Activated B cell treated with CpG ODN at 0.5 μM for 24 hours (primary cell): ENCODE measurements at regions of chr10 and their contacts with region 1.

Region 1: DNA sequence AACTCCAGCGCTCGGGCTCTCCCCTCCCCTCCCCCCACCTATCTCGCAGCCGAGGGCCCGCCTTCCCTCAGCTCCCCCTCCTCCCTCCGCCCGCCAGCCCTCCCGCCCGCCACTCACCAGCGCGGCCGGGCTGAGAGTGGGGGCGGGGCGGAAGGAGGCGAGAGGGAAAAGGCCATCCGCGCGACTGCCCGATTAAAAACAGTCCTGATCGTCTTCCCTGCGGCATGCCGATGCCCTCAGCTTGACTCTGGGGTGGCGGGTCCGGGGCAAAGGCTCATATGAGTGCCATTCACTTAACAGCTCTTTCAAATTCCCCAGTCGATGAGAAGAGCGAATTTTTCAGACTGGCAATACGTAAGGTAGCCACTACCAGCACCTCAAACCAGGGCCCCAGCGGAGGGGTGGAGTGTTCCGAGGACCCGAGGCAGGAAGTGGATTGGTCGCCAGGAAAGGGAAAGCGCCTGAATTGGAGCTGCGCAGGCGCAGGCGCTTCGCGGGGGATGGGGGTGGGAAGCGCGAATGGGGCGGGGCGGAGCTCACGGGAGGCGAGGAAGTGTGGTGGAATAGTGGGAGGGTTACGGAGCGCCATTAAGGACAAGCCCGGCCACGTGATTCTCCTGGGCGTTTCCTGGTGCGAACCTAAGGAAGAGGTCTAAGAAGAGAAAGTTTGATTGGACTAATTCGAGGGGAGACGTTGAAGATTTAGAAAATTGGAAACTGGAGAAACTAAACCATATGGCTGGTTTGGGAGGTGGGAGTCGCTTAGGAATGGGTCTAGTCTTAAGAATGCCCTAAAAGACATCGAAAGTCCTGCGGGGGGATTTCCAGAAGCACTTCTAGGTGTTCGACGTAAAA is at the start of gene UPF2:
- DNase-seq: peak; percentile 90
- ATAC-seq: peak; percentile 74
- H3K4me3 Mint-ChIP-seq: peak within 1 kb of the TSS; percentile 95
- H3K27ac Mint-ChIP-seq: peak within 1 kb of the TSS; percentile 100
- H3K4me1 Mint-ChIP-seq: peaks cover 49% of the 10 kb centered on the region
- H3K27me3 Mint-ChIP-seq: no peaks in the 10 kb centered on the region
- CTCF ChIP-seq: no peak
- total RNA-seq, gene UPF2: 57.9 and 58.0 TPM in 2 replicates

Region 2: GRCh38 chr10:12031404-12031803 is 11.6 kb before region 1 on chr10:
- CTCF ChIA-PET with region 1: no interaction called
- POLR2A ChIA-PET with region 1: interaction called, 20 read pairs
- intact Hi-C with region 1: no loop called
- DNase-seq: no peak
- ATAC-seq: no peak
- H3K4me3 Mint-ChIP-seq: no peak overlapping the region
- H3K27ac Mint-ChIP-seq: no peak overlapping the region
- H3K4me1 Mint-ChIP-seq: peaks cover 12% of the 10 kb centered on the region
- H3K27me3 Mint-ChIP-seq: no peaks in the 10 kb centered on the region
- CTCF ChIP-seq: no peak

Region 3: GRCh38 chr10:12068449-12069269 is 25.6 kb after region 1 on chr10 and contains the start of gene DHTKD1:
- CTCF ChIA-PET with region 1: no interaction called
- POLR2A ChIA-PET with region 1: interaction called, 277 read pairs
- intact Hi-C with region 1: loop called (anchors 1 kb)
- DNase-seq: peak; percentile 99
- ATAC-seq: peak; percentile 96
- H3K4me3 Mint-ChIP-seq: peak within 1 kb of the TSS; percentile 87
- H3K27ac Mint-ChIP-seq: peak within 1 kb of the TSS; percentile 90
- H3K4me1 Mint-ChIP-seq: peaks cover 44% of the 10 kb centered on the region
- H3K27me3 Mint-ChIP-seq: no peaks in the 10 kb centered on the region
- CTCF ChIP-seq: no peak
- total RNA-seq, gene DHTKD1: 58.2 and 60.7 TPM in 2 replicates

Region 4: DNA sequence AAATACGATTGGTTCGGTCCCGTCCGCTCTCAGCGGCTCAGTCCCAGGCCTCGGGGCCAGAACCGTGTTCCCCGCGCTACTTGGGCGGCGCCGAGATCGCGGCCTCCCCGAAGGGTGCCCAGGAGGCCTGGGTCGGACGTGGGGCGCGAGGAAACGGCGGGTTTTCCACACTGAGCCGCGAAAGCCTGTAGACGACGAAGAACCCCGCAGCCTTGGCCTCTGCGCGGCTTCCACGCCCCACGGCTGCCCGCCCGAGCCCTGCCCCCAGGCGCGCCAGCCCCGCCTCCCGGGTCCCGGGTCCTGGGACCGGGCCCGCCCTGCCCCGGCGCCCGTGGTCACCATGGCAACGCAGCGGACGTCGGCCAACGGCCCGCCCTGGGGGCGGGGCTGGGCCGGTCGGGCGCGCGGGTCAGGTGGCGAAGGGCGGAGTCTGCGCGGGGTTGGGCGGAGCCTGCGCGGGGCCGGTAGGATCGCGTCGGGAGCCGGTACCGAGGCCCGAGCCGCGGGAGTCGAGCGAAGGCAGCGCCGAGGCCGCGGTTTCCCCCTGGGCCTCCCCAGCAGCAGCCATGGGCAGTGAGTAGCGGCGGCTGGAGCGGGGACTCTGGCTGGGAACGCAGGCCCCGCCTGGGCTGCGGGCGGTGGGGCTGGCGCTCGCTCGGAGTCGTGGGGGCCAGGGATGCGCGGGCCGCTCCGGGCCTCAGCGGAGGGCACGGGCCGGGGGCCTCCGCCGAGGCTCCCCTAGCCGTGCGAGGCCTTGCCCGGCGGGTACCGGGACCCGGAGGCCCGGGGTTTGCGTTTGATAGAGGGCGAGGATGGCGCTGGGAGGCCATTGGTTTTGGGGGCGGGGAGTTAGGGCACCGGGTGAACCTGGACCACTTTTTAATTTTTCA is 86.4 kb after region 1 on chr10 and contains the start of gene SEC61A2:
- CTCF ChIA-PET with region 1: interaction called, 6 read pairs
- POLR2A ChIA-PET with region 1: interaction called, 39 read pairs
- intact Hi-C with region 1: loop called (anchors 1 kb)
- DNase-seq: peak; percentile 100
- ATAC-seq: peak; percentile 89
- H3K4me3 Mint-ChIP-seq: peak within 1 kb of the TSS; percentile 90
- H3K27ac Mint-ChIP-seq: peak within 1 kb of the TSS; percentile 88
- H3K4me1 Mint-ChIP-seq: peaks cover 15% of the 10 kb centered on the region
- H3K27me3 Mint-ChIP-seq: no peaks in the 10 kb centered on the region
- CTCF ChIP-seq: no peak
- total RNA-seq, gene SEC61A2: 13.3 and 20.8 TPM in 2 replicates

Region 5: DNA sequence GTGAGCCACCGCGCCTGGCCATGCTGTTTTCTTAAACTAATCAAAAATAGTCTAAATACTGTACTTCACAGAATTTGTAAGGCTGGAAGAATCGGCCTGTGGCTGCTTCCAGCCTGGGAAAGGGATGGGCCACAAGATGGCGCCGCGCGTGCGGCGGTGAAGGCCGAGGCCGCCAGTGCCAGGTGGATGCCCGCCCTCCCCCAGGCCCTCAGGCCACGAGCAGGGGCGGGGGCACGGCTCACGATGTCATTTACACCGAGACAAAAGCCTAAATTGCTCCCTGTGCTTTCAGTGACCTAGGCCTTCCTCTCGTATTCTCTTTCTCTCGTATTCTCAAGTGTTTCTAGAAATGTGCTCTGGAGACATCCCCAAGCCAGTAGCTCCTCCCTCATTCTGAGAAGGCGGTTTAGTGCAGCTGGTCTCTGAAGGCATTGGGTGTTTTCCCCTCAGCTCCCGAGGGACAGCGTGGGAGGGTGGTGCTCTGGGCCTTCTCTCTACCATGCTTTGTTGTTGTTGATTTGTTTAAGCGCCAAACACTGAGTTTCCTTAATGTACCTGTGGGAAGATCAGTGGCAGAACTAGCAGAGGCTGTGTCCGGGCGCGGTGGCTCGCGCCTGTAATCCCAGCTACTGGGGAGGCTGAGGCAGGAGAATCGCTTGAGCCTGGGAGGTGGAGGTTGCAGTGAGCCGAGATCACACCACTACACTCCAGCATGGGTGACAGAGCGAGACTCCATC is 221.3 kb after region 1 on chr10:
- CTCF ChIA-PET with region 1: interaction called, 3 read pairs
- POLR2A ChIA-PET with region 1: interaction called, 6 read pairs
- intact Hi-C with region 1: loop called (anchors 2 kb)
- DNase-seq: peak; percentile 86
- ATAC-seq: peak; percentile 87
- H3K4me3 Mint-ChIP-seq: peak overlapping the region; percentile 83
- H3K27ac Mint-ChIP-seq: peak overlapping the region; percentile 100
- H3K4me1 Mint-ChIP-seq: peaks cover 58% of the 10 kb centered on the region
- H3K27me3 Mint-ChIP-seq: no peaks in the 10 kb centered on the region
- CTCF ChIP-seq: no peak

Region 6: DNA sequence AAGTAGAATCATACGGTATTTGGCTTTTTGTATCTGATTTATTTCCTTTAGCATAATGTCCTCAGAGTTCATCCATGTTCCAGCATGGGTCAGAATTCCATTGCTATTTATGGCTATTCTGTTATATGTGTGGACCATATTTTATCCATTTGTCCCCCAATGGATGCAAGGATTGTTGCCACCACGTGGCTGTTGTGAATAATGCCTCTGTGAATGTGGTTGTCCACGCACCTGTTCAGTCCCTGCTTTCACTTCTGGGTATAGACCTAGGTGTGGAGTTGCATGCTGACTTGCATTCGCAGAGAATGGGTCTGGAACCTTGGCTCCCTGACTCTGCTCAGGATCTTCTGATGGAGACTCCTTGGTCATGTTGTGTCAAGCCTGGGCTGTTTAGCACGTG is 506.3 kb after region 1 on chr10:
- CTCF ChIA-PET with region 1: no interaction called
- POLR2A ChIA-PET with region 1: no interaction called
- intact Hi-C with region 1: no loop called
- DNase-seq: no peak
- ATAC-seq: no peak
- H3K4me3 Mint-ChIP-seq: no peak overlapping the region
- H3K27ac Mint-ChIP-seq: no peak overlapping the region
- H3K4me1 Mint-ChIP-seq: peaks cover 40% of the 10 kb centered on the region
- H3K27me3 Mint-ChIP-seq: no peaks in the 10 kb centered on the region
- CTCF ChIP-seq: no peak